Activated naive CD4-positive, alpha-beta T cell treated with anti-CD3 and anti-CD28 coated beads for 36 hours (primary cell): ENCODE measurements at regions of chr10 and their contacts with region 1.

Region 1: DNA sequence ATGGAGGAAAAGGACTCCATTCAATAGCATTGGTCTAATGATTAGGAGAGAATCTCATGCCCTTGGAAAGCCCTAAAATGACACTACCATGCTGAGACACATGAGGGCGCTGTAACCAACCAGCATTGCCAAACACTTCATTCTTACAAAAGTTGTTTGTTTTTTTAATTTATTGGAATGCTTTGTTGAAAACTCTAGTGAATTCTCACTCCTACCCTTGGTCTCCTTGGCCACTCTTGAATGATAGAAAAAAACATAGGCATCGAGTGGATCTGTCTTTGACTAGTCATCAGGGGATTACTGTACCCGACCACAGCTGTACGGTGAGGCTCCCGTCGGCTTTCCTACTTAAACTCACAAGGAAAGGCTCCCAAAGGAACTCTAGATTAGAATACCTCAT is 29.3 kb upstream of the ADD3 start:
- DNase-seq: peak; percentile 87
- H3K4me3 Mint-ChIP-seq: no peak overlapping the region
- H3K27ac Mint-ChIP-seq: no peak overlapping the region
- H3K4me1 Mint-ChIP-seq: peaks cover 14% of the 10 kb centered on the region
- H3K27me3 Mint-ChIP-seq: no peaks in the 10 kb centered on the region

Region 2: GRCh38 chr10:109784236-109784635 is 194.2 kb before region 1 on chr10:
- CTCF ChIA-PET with region 1: no interaction called
- intact Hi-C with region 1: no loop called
- DNase-seq: no peak
- H3K4me3 Mint-ChIP-seq: no peak overlapping the region
- H3K27ac Mint-ChIP-seq: no peak overlapping the region
- H3K4me1 Mint-ChIP-seq: no peaks in the 10 kb centered on the region
- H3K27me3 Mint-ChIP-seq: peaks cover 9% of the 10 kb centered on the region

Region 3: DNA sequence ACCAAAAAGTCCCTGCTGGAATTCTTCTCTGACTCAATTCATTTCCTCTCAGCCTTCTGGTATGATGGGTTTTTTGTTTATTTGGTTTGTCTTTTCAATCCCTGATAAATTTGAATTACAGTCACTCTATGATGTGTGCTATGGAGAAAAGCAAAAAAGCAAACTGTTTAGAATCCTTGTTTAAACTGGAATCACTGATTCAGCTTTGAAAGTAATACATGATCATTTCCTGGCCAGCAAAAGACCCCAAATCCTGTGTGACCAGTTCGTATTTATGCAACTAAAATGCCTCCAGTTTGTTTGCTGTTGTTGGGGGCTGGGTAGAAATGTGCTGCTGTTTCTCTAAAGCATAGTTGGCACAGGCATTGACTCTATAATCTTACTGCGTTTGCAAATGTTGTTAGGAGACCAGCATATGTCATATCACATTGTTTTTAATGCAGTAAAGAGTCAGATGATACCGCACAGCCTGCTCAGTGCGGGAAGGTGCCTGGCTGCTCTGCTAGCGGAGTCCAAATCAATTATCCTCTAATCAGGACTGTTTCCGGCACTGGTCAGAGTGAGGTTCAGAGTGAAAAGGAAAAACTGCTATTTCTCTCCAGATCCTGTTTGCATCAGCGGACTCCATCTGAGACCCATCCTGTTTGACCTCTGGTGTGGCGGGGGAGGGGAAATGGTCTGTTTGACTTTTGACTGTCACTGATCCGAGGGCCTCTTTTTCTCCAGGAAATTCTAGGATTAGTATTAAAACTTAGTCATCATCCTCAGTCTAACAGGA is 11.3 kb before region 1 on chr10:
- CTCF ChIA-PET with region 1: interaction called, 16 read pairs
- intact Hi-C with region 1: no loop called
- DNase-seq: no peak
- H3K4me3 Mint-ChIP-seq: no peak overlapping the region
- H3K27ac Mint-ChIP-seq: no peak overlapping the region
- H3K4me1 Mint-ChIP-seq: peaks cover 2% of the 10 kb centered on the region
- H3K27me3 Mint-ChIP-seq: no peaks in the 10 kb centered on the region

Region 4: GRCh38 chr10:110036640-110037039 is 58.2 kb after region 1 on chr10:
- CTCF ChIA-PET with region 1: interaction called, 3 read pairs
- intact Hi-C with region 1: loop called (anchors 1 kb)
- DNase-seq: no peak
- H3K4me3 Mint-ChIP-seq: no peak overlapping the region
- H3K27ac Mint-ChIP-seq: peak overlapping the region; percentile 91
- H3K4me1 Mint-ChIP-seq: peaks cover 91% of the 10 kb centered on the region
- H3K27me3 Mint-ChIP-seq: no peaks in the 10 kb centered on the region

Region 5: DNA sequence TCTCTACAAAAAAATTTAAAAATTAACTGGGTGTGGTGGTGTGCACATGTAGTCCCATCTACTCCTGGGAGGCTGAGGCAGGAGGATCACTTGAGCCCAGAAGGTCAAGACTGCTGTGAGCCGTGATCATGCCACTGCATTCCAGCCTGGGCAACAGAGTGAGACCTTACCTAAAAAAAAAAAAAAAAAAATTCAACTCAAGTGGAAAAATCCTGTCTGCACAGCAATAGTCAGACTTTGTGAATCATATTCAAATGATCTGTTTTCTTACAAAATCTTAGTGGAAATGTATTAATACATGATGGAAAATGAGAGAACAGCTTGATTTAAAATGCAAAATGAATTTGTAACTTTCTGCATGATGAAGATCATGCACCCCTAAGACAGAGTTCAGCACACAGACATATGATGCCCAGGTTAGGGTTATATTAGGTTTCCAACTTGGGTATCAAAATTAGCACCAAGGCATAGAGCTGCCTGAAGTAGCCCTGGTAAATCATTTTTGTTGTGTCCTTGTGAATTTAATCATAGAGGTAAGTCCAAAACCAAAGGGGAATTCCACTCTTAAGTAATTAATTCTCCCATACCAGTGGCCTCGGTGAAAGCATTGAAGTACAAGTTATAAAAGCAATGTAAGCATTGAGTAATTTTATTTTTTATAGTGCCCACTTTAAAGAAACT is 123.1 kb after region 1 on chr10:
- CTCF ChIA-PET with region 1: interaction called, 3 read pairs
- intact Hi-C with region 1: loop called (anchors 1 kb)
- DNase-seq: no peak
- H3K4me3 Mint-ChIP-seq: no peak overlapping the region
- H3K27ac Mint-ChIP-seq: peak overlapping the region; percentile 89
- H3K4me1 Mint-ChIP-seq: peaks cover 76% of the 10 kb centered on the region
- H3K27me3 Mint-ChIP-seq: no peaks in the 10 kb centered on the region

Region 6: GRCh38 chr10:110567201-110568054 is 588.9 kb after region 1 on chr10 and contains the start of gene SMC3:
- CTCF ChIA-PET with region 1: no interaction called
- intact Hi-C with region 1: loop called (anchors 5 kb)
- DNase-seq: peak; percentile 95
- H3K4me3 Mint-ChIP-seq: peak within 1 kb of the TSS; percentile 87
- H3K27ac Mint-ChIP-seq: peak within 1 kb of the TSS; percentile 98
- H3K4me1 Mint-ChIP-seq: peaks cover 31% of the 10 kb centered on the region
- H3K27me3 Mint-ChIP-seq: peaks cover 5% of the 10 kb centered on the region
- total RNA-seq, gene SMC3: 81.3 to 85.0 TPM